Ovary (tissue), 10 donors: ENCODE measurements at regions of chr11 and their contacts with region 1.

Region 1: GRCh38 chr11:122202951-122203456 is 87.0 kb upstream of the BLID start:
- DNase-seq: peak; percentile 79 to 91 (median 83)
- H3K4me3 ChIP-seq: peak overlapping the region; percentile 45
- H3K27ac ChIP-seq: peak overlapping the region in 1 of 2 donors; percentile 40
- H3K4me1 ChIP-seq: peaks cover 17% of the 10 kb centered on the region
- H3K27me3 ChIP-seq: no peaks in the 10 kb centered on the region
- CTCF ChIP-seq: peak; percentile 86 to 96 (median 95)
- EP300 ChIP-seq: no peak
- POLR2A ChIP-seq: no peak

Region 2: GRCh38 chr11:121722431-121723245 is 480.4 kb before region 1 on chr11:
- intact Hi-C with region 1: loop called in 1 of 4 experiments (anchors 10 kb)
- DNase-seq: peak; percentile 90 to 94 (median 93)
- H3K4me3 ChIP-seq: peak overlapping the region; percentile 40
- H3K27ac ChIP-seq: peak overlapping the region; percentile 69 to 97
- H3K4me1 ChIP-seq: peaks cover 2% of the 10 kb centered on the region
- H3K27me3 ChIP-seq: no peaks in the 10 kb centered on the region
- CTCF ChIP-seq: peak in 2 of 3 donors; percentile 24 to 35
- EP300 ChIP-seq: peak; percentile 79
- POLR2A ChIP-seq: peak; percentile 75

Region 3: GRCh38 chr11:122101625-122102291 is 101.2 kb before region 1 on chr11:
- intact Hi-C with region 1: loop called (anchors 2 to 5 kb)
- DNase-seq: peak; percentile 75 to 82 (median 77)
- H3K4me3 ChIP-seq: peak overlapping the region; percentile 58
- H3K27ac ChIP-seq: peak overlapping the region; percentile 30 to 93
- H3K4me1 ChIP-seq: no peaks in the 10 kb centered on the region
- H3K27me3 ChIP-seq: no peaks in the 10 kb centered on the region
- CTCF ChIP-seq: peak; percentile 55 to 66 (median 57)
- EP300 ChIP-seq: no peak
- POLR2A ChIP-seq: no peak

Region 4: GRCh38 chr11:122439911-122440810 is 237.2 kb after region 1 on chr11:
- intact Hi-C with region 1: loop called in 1 of 4 experiments (anchors 10 kb)
- DNase-seq: peak; percentile 50 to 81 (median 67)
- H3K4me3 ChIP-seq: peak overlapping the region; percentile 43
- H3K27ac ChIP-seq: no peak overlapping the region
- H3K4me1 ChIP-seq: peaks cover 3% of the 10 kb centered on the region
- H3K27me3 ChIP-seq: no peaks in the 10 kb centered on the region
- CTCF ChIP-seq: no peak
- EP300 ChIP-seq: no peak
- POLR2A ChIP-seq: no peak